HepG2 (cell line): ENCODE measurements at regions of chr16 and their contacts with region 1.

Region 1: DNA sequence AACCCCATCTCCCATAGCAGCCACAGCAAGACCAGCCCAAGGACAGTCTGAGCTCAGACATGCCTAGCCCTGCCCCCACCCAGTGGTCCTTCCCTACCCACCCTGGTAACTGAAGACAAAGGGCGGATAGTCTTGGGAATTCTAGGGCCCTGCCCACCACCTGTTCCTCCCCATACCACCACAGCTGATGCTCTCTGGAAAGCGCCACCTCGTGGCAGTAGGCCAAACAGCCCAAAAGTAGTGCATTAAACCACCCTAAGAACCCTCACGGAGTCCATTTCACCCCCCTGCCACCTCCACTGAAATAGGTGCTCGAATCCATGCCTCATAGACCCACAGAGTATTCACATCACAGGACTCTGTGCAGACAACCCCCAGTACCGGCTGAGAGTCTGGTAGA is 1021.4 kb downstream of the CDH8 start:
- DNase-seq: no peak
- ATAC-seq: no peak
- H3K4me3 ChIP-seq: no peak overlapping the region
- H3K27ac ChIP-seq: no peak overlapping the region
- H3K4me1 ChIP-seq: no peaks in the 10 kb centered on the region
- H3K27me3 ChIP-seq: no peaks in the 10 kb centered on the region; a peak in 1 of 5 replicates
- CTCF ChIP-seq: no peak
- EP300 ChIP-seq: no peak
- POLR2A ChIP-seq: no peak
- RAD21 ChIP-seq: no peak

Region 2: DNA sequence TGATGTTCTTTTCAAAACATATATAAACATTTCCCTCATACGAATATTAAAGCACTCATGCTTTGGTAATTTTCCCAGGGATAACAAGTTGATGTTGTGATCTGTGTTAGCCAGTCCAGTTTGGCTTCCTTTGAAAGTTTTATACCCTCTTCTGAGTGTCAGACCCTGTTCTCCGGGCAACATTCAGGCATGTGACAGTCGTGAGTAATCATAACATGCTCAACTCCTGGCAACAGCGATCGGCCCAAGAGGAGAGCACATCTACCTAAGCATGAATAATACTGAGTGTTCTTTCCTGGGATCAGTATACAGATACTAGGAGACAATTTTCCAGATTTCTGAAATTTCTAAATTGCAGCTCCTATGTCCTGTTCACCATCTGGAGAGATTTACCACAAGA is 65.1 kb before region 1 on chr16:
- CTCF ChIA-PET with region 1: no interaction called
- POLR2A ChIA-PET with region 1: no interaction called
- in situ Hi-C with region 1: loop called (anchors 10 kb)
- intact Hi-C with region 1: no loop called
- DNase-seq: no peak
- ATAC-seq: no peak
- H3K4me3 ChIP-seq: no peak overlapping the region
- H3K27ac ChIP-seq: no peak overlapping the region
- H3K4me1 ChIP-seq: no peaks in the 10 kb centered on the region
- H3K27me3 ChIP-seq: no peaks in the 10 kb centered on the region
- CTCF ChIP-seq: no peak
- EP300 ChIP-seq: no peak
- POLR2A ChIP-seq: no peak
- RAD21 ChIP-seq: no peak

Region 3: DNA sequence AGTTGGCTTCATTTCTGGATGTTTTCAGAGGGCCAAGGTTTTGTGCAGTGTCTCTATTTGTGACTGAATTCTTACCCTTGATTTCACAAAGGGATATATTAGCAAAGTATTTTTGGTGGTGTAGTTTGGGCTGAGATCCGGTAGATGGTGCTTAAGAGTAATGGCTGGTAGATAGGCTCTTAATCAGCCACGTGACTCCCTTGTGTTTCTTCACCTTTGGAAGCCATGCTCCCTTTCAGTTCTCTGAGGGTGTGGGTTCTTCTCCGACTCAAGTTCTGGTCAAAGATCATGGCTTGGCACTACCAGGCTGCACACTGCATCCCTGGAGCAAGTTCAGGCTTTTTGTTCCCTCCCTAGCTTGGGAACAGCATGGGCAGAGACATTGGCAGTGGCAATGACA is 134.1 kb after region 1 on chr16:
- CTCF ChIA-PET with region 1: no interaction called
- POLR2A ChIA-PET with region 1: no interaction called
- in situ Hi-C with region 1: no loop called
- intact Hi-C with region 1: no loop called
- DNase-seq: peak; percentile 7
- ATAC-seq: no peak
- H3K4me3 ChIP-seq: no peak overlapping the region
- H3K27ac ChIP-seq: no peak overlapping the region
- H3K4me1 ChIP-seq: no peaks in the 10 kb centered on the region
- H3K27me3 ChIP-seq: no peaks in the 10 kb centered on the region
- CTCF ChIP-seq: peak; percentile 9; the same call in 1 of the 2 replicates
- EP300 ChIP-seq: no peak
- POLR2A ChIP-seq: no peak
- RAD21 ChIP-seq: no peak